ENCODE measurements at regions of chr15 and their contacts with region 1.

Region 1: GRCh38 chr15:67559158-67559557 is 16.7 kb downstream of the MAP2K5 start:
- DNase-seq: no peak
- ATAC-seq: no peak
- H3K4me3 ChIP-seq: no peak overlapping the region
- H3K27ac ChIP-seq: no peak overlapping the region
- H3K4me1 ChIP-seq: peaks cover 28% of the 10 kb centered on the region
- H3K27me3 ChIP-seq: no peaks in the 10 kb centered on the region
- CTCF ChIP-seq: no peak
- EP300 ChIP-seq: no peak
- POLR2A ChIP-seq: no peak
- RAD21 ChIP-seq: no peak

Region 2: DNA sequence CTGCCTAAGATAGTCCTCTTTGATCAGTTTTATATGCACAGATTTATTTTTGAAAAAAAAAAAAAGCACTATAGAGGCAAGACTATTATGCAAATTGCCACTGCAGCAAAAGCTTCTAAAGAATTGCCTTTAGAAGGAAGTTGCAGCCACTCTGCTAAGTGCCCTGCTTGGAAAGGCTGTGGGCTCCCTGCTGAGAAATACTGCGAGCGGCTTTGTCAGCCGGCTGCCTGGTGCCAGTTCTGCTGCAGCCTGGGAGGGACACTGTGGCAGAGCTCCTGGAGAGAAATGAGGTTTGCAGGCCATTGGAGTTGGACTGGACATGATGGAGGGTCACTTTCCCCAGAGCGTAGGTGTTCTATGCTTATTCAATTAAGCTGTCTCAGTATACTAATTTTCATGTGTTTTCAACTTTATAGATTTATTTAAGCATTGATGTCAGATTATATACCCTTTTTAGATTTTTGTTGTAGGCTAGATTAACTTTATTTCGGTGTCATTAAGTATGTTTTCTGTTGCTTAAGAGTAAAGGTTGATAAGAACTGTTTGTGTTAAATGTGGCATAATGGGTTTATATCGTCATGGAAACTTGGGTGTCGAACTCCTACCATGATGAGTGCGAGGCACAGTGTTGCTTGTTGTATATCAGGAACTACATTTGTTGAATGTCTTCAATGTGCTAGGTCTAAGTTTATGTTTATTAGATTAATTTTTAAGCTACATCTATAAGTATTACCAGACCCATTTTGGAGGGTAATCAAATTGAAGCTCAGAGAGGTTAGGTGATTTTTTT is 10.1 kb before region 1 on chr15:
- CTCF ChIA-PET with region 1: interaction called, 5 read pairs
- POLR2A ChIA-PET with region 1: interaction called, 7 read pairs
- RAD21 ChIA-PET with region 1: interaction called, 3 read pairs
- SMC1A ChIA-PET with region 1: interaction called, 19 read pairs
- in situ Hi-C with region 1: no loop called
- intact Hi-C with region 1: no loop called
- DNase-seq: no peak
- ATAC-seq: peak; percentile 52
- H3K4me3 ChIP-seq: no peak overlapping the region
- H3K27ac ChIP-seq: no peak overlapping the region
- H3K4me1 ChIP-seq: peaks cover 5% of the 10 kb centered on the region
- H3K27me3 ChIP-seq: no peaks in the 10 kb centered on the region
- CTCF ChIP-seq: no peak
- EP300 ChIP-seq: no peak
- POLR2A ChIP-seq: no peak
- RAD21 ChIP-seq: no peak

Region 3: DNA sequence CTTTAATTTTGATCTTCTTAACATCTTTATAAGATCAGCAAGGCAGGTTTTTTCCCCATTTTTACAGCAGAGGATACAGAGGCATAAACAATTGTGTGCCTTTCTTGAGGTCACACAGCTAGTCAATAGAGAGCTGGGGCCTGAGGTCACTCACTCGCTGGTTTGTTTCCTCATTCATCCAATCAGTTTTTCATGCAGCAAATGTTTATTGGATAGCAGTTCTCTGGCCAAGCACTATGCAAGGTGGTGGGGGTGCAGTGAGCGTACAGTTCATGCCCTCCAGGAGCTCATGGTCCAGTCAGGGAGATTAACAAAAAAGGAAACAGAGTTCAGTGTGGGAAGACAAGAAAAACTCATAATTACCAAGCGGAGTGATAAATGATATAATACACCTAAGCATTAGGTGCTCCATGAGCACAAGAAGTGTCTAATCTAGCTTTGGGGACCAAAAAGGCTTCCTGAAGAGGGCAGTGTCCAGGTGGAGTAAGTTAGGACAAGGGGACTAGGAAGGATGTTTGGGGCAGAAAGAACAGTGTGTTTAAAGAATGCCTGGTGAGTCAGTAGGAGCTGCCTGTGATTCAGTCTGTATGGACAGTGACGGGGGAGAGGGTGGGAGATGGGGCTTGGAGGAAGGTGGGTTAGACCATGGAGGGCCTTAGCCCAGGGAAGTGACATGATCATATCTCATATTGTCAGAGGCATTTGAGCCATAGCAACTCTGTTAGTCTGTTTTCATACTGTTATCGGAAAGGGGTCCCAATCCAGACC is 12.7 kb after region 1 on chr15:
- CTCF ChIA-PET with region 1: interaction called, 7 read pairs
- POLR2A ChIA-PET with region 1: interaction called, 4 read pairs
- RAD21 ChIA-PET with region 1: no interaction called
- SMC1A ChIA-PET with region 1: interaction called, 21 read pairs
- in situ Hi-C with region 1: no loop called
- intact Hi-C with region 1: no loop called
- DNase-seq: no peak
- ATAC-seq: no peak
- H3K4me3 ChIP-seq: no peak overlapping the region
- H3K27ac ChIP-seq: no peak overlapping the region
- H3K4me1 ChIP-seq: peaks cover 9% of the 10 kb centered on the region
- H3K27me3 ChIP-seq: no peaks in the 10 kb centered on the region
- CTCF ChIP-seq: no peak
- EP300 ChIP-seq: no peak
- POLR2A ChIP-seq: no peak
- RAD21 ChIP-seq: no peak